K562 (cell line): ENCODE measurements at regions of chr14 and their contacts with region 1.

Region 1: GRCh38 chr14:88792572-88793258 is at the start of gene EML5:
- DNase-seq: peak; percentile 69 to 84 (median 72)
- ATAC-seq: peak; percentile 99
- H3K4me3 ChIP-seq: peak within 1 kb of the TSS; percentile 48
- H3K27ac ChIP-seq: no peak within 1 kb of the TSS
- H3K4me1 ChIP-seq: peaks cover 5 to 16% of the 10 kb centered on the region in 2 experiments; a peak in 4 of 5 replicates
- H3K27me3 ChIP-seq: peaks cover 2 to 4% of the 10 kb centered on the region in 2 experiments; a peak in 2 of 5 replicates
- CTCF ChIP-seq: peak in 2 of 3 experiments; percentile 44 to 45; a peak in 3 of 6 replicates
- EP300 ChIP-seq: no peak
- POLR2A ChIP-seq: 0 out of 2 replicates have a peak, but pooled peaks have one; percentile 45
- RAD21 ChIP-seq: peak; percentile 47 to 56; a peak in 3 of 4 replicates
- polyA plus RNA-seq, gene EML5: 0.06 to 0.08 TPM

Region 2: GRCh38 chr14:88533064-88533602 is 259.6 kb before region 1 on chr14:
- CTCF ChIA-PET with region 1: no interaction called
- POLR2A ChIA-PET with region 1: no interaction called
- in situ Hi-C with region 1: no loop called
- intact Hi-C with region 1: no loop called
- DNase-seq: no peak
- ATAC-seq: no peak
- H3K4me3 ChIP-seq: no peak overlapping the region
- H3K27ac ChIP-seq: no peak overlapping the region
- H3K4me1 ChIP-seq: no peaks in the 10 kb centered on the region
- H3K27me3 ChIP-seq: no peaks in the 10 kb centered on the region
- CTCF ChIP-seq: no peak
- EP300 ChIP-seq: no peak
- POLR2A ChIP-seq: no peak
- RAD21 ChIP-seq: no peak

Region 3: DNA sequence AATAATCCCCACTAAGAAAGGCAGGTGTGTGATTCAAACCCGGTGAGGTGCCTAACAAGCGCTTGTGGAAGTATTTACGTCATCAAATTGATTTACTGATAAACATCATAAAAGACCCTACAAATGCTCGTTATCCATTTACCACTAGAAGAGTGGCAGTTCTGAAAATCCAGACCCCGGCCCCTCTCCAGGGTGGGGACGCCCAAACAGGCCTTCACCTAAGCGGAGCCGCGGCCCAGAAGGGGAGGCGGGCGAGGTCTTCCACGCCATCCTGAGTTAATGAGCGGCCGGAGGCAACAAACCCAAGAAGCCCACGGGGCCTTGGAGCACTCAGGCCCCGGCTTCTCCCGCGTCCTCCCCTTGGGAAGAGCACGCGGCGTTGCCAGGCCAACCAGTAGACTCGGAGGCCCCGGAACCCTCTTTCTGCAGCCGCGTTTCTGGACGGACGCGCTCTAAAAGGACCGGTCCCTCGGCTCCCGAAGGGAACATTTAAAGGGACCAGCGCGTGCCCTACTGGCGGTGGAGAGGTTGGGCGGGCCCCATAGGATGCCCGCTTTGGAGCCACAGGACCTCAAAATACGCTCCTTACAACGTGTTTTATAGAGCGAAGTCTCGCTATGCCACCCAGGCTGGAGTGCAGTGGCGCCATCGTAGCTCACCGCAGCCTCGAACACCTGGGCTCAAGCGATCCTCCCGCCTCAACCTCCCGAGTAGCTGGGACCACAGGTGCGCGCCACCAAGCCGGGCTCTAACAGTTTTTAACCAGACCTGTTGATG is 241.4 kb before region 1 on chr14:
- CTCF ChIA-PET with region 1: no interaction called
- POLR2A ChIA-PET with region 1: no interaction called
- in situ Hi-C with region 1: no loop called
- intact Hi-C with region 1: no loop called
- DNase-seq: peak; percentile 32 to 58 (median 38)
- ATAC-seq: peak; percentile 67
- H3K4me3 ChIP-seq: peak overlapping the region; percentile 41
- H3K27ac ChIP-seq: no peak overlapping the region
- H3K4me1 ChIP-seq: peaks cover 0 to 15% of the 10 kb centered on the region in 2 experiments; a peak in 3 of 5 replicates
- H3K27me3 ChIP-seq: no peaks in the 10 kb centered on the region
- CTCF ChIP-seq: peak in 1 of 3 experiments; percentile 14; a peak in 1 of 6 replicates
- EP300 ChIP-seq: no peak
- POLR2A ChIP-seq: 0 out of 2 replicates have a peak, but pooled peaks have one; percentile 20
- RAD21 ChIP-seq: no peak

Region 4: DNA sequence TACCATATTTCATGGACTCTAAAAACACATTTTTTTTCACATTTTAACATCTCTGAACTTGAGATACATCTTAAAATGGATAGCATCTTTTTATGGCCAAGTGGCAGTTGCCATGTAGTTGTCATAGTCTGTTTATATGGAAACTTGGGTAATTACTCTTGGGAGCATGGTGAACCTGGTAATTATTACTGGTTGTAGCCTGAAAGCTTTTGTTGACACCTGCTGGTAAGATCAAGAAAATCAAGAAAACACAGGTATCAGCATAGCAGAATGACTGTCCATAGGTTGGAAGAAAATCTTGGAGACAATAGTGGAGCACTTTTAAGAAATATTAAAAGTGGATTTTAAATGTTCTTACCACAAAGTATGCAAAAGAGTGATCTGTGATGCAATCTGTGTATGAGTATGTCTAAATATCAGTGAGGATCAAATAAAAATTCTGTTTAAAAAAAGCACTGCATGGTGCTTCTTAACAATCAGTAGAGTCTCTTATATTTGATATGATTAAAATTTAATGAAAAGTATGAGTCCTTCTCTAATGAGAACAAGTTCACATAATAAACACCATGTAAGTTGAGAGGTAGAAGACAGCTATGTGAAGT is 75.9 kb after region 1 on chr14:
- CTCF ChIA-PET with region 1: no interaction called
- POLR2A ChIA-PET with region 1: no interaction called
- in situ Hi-C with region 1: no loop called
- intact Hi-C with region 1: loop called (anchors 2 kb)
- DNase-seq: peak in 2 of 4 experiments; percentile 5 to 27
- ATAC-seq: peak; percentile 75
- H3K4me3 ChIP-seq: no peak overlapping the region
- H3K27ac ChIP-seq: no peak overlapping the region
- H3K4me1 ChIP-seq: no peaks in the 10 kb centered on the region
- H3K27me3 ChIP-seq: no peaks in the 10 kb centered on the region
- CTCF ChIP-seq: peak; percentile 22 to 63 (median 32); a peak in 3 of 6 replicates
- EP300 ChIP-seq: no peak
- POLR2A ChIP-seq: no peak
- RAD21 ChIP-seq: peak; percentile 52 to 75

Region 5: GRCh38 chr14:88904864-88905263 is 112.1 kb after region 1 on chr14:
- CTCF ChIA-PET with region 1: no interaction called
- POLR2A ChIA-PET with region 1: no interaction called
- in situ Hi-C with region 1: no loop called
- intact Hi-C with region 1: no loop called
- DNase-seq: no peak
- ATAC-seq: no peak
- H3K4me3 ChIP-seq: no peak overlapping the region
- H3K27ac ChIP-seq: no peak overlapping the region
- H3K4me1 ChIP-seq: no peaks in the 10 kb centered on the region
- H3K27me3 ChIP-seq: no peaks in the 10 kb centered on the region
- CTCF ChIP-seq: no peak
- EP300 ChIP-seq: no peak
- POLR2A ChIP-seq: no peak
- RAD21 ChIP-seq: no peak